Motor neuron (in vitro differentiated cells): ENCODE measurements at regions of chr7 and their contacts with region 1.

Region 1: GRCh38 chr7:111486472-111487142 is 75.7 kb downstream of the IMMP2L start:
- ATAC-seq: peak; percentile 35 to 70 (median 58)
- H3K4me3 ChIP-seq: no peak overlapping the region
- H3K27ac ChIP-seq: no peak overlapping the region
- H3K4me1 ChIP-seq: peaks cover 0 to 3% of the 10 kb centered on the region in 2 donors

Region 2: GRCh38 chr7:111098011-111098925 is 388.3 kb before region 1 on chr7:
- in situ Hi-C with region 1: loop called in 3 of 9 experiments (anchors 25 kb)
- ATAC-seq: peak in 5 of 8 experiments; percentile 33 to 76 (median 52)
- H3K4me3 ChIP-seq: no peak overlapping the region
- H3K27ac ChIP-seq: no peak overlapping the region
- H3K4me1 ChIP-seq: peaks cover 5 to 27% of the 10 kb centered on the region in 2 donors

Region 3: DNA sequence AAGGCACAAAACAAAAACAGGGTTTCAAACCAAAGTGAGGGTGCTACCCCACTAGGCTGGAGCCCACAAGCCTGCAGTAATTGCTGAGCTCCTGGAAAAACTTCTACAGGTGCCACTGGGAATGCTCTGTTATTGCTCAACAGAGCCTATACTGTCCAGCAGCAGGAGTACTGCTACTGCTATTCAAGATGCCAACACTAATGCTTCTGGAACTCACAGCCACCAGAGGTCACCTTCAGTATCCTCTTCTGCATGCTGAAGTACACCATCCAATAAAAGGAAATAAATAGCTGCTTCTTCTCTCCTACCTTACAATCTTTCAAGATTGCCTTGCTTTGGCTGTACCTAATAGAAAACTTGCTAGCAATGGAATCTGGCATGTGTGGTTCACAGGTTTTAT is 173.6 kb before region 1 on chr7:
- in situ Hi-C with region 1: loop called in 1 of 9 experiments (anchors 25 kb)
- ATAC-seq: peak in 2 of 8 experiments; percentile 16 to 26
- H3K4me3 ChIP-seq: no peak overlapping the region
- H3K27ac ChIP-seq: no peak overlapping the region
- H3K4me1 ChIP-seq: no peaks in the 10 kb centered on the region

Region 4: DNA sequence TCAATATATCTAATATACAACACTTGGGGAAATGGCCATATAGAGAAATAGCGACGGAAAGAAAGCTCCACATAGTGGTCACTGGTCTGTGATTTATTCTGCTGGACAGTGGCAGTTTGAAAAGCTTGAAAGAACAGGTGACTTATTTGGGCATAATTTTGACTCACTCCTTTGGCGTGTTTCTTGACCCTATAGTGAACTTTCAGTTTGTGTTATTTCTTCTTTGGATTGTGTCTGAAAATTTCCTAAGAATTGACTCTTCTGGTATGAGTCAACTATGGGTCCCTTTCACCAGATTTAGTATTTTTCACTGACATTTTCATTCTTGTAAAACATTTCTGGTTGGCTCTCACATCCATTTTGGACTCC is 101.4 kb after region 1 on chr7:
- in situ Hi-C with region 1: no loop called
- ATAC-seq: peak in 1 of 8 experiments; percentile 18
- H3K4me3 ChIP-seq: no peak overlapping the region
- H3K27ac ChIP-seq: no peak overlapping the region
- H3K4me1 ChIP-seq: no peaks in the 10 kb centered on the region

Region 5: DNA sequence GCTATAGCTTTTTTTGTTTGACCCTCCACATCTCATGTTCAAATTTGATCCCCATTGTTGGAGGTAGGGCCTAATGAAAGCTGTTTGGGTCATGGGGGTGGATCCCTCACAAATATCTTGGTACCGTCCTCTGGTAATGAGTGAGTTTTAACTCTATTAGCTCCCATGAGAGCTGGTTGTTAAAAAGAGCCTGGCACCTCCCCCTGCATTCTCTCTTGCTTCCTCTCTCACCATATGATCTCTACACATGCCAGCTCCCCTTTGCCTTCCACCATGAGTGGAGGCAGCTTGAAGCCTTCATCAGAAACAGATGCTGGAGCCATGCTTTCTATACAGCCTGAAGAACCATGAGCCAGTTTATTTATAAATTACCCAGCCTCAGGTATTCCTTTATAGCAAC is 118.6 kb after region 1 on chr7:
- in situ Hi-C with region 1: no loop called
- ATAC-seq: no peak
- H3K4me3 ChIP-seq: no peak overlapping the region
- H3K27ac ChIP-seq: no peak overlapping the region
- H3K4me1 ChIP-seq: peaks cover 0 to 8% of the 10 kb centered on the region in 2 donors

Region 6: DNA sequence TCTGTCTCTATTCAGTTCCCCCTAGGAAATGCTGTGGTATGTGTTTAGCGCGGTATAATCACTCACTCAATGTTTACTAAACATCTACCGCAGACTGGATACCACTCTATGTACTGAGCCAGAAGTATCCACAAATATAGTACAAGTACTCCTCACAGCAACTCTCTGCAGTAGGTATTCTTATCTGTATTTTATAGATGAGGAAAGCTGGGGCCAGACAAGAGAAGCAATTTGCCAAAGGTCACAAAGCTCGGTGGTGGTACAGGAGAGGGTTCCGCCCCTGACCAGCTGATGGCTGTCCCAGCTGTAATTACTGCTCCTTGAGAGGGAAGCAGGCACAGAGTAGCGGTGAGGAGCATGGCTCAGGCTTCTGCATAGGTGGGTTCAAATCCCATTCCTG is 535.5 kb after region 1 on chr7:
- in situ Hi-C with region 1: no loop called
- ATAC-seq: peak in 1 of 8 experiments; percentile 82
- H3K4me3 ChIP-seq: no peak overlapping the region
- H3K27ac ChIP-seq: no peak overlapping the region
- H3K4me1 ChIP-seq: no peaks in the 10 kb centered on the region